ENCODE measurements at regions of chr6 and their contacts with region 1.

Region 1: DNA sequence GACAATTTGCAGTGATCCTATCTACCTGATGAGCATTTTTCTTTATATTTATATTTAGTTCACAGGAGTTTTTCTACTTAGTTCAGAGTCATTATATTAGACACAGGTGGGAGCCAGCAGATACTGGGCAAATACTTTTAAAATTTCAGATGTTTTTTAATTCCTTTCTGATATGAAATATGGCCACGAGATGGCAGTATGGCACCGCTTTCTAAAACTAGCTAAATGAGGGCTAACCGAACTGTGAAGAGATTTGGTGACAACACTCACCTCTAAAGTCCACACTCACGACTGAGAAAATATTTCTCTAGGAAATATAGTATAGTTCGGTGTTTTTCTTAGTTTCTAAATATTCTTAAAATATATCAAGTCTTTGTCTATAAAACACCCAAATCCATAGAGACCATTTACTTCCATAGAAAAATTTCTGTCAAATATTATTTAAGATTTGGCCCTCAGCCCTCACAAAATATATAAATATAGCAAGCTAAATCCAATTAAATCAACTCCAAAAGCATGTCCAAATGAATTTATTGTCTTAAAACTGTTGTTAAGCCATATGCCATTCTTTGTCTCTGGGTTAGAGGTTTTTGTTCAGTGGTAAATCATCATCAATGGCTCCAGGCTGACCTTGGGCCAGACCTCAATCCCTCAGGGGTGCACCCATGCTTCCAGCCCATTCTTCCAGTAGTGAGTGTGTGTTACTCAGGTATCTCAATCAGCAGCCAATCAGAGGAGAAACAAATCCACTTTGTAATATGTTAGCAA is 63.6 kb downstream of the HUS1B start:
- DNase-seq: peak; percentile 80
- ATAC-seq: peak; percentile 63
- H3K4me3 Mint-ChIP-seq: no peak overlapping the region
- H3K27ac Mint-ChIP-seq: peak overlapping the region; percentile 74
- H3K4me1 Mint-ChIP-seq: peaks cover 9% of the 10 kb centered on the region
- H3K27me3 Mint-ChIP-seq: no peaks in the 10 kb centered on the region

Region 2: GRCh38 chr6:470901-471448 is 122.3 kb before region 1 on chr6:
- CTCF ChIA-PET with region 1: no interaction called
- POLR2A ChIA-PET with region 1: no interaction called
- intact Hi-C with region 1: no loop called
- DNase-seq: no peak
- ATAC-seq: no peak
- H3K4me3 Mint-ChIP-seq: no peak overlapping the region
- H3K27ac Mint-ChIP-seq: no peak overlapping the region
- H3K4me1 Mint-ChIP-seq: peaks cover 67% of the 10 kb centered on the region
- H3K27me3 Mint-ChIP-seq: peaks cover 6% of the 10 kb centered on the region

Region 3: DNA sequence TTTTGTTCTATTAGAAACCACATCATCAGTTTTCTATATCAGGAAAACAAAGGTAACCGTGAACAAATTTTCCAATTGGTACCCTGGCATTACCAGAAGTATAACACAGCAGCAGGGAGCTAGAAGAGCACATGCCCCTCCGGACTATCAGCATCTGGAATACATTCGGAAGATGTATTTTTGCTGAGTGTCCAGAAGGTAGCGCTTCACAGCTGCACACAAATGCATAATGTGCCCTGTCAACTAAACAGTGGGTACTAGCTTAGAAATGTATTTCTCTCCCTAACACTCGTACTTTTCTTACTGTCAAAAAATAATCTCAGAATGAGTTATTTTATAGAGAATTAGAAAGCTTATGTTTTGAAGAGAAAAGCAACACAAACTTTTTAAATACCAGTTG is 14.0 kb before region 1 on chr6:
- CTCF ChIA-PET with region 1: interaction called, 34 read pairs
- POLR2A ChIA-PET with region 1: no interaction called
- intact Hi-C with region 1: no loop called
- DNase-seq: no peak
- ATAC-seq: no peak
- H3K4me3 Mint-ChIP-seq: no peak overlapping the region
- H3K27ac Mint-ChIP-seq: no peak overlapping the region
- H3K4me1 Mint-ChIP-seq: peaks cover 18% of the 10 kb centered on the region
- H3K27me3 Mint-ChIP-seq: no peaks in the 10 kb centered on the region

Region 4: GRCh38 chr6:701700-702479 is 108.6 kb after region 1 on chr6:
- CTCF ChIA-PET with region 1: interaction called, 10 read pairs
- POLR2A ChIA-PET with region 1: no interaction called
- intact Hi-C with region 1: no loop called
- DNase-seq: no peak
- ATAC-seq: no peak
- H3K4me3 Mint-ChIP-seq: no peak overlapping the region
- H3K27ac Mint-ChIP-seq: no peak overlapping the region
- H3K4me1 Mint-ChIP-seq: peaks cover 2% of the 10 kb centered on the region
- H3K27me3 Mint-ChIP-seq: peaks cover 8% of the 10 kb centered on the region

Region 5: GRCh38 chr6:786946-787763 is 193.8 kb after region 1 on chr6:
- CTCF ChIA-PET with region 1: interaction called, 7 read pairs
- POLR2A ChIA-PET with region 1: no interaction called
- intact Hi-C with region 1: loop called (anchors 1 to 2 kb)
- DNase-seq: peak; percentile 36
- ATAC-seq: peak; percentile 53
- H3K4me3 Mint-ChIP-seq: no peak overlapping the region
- H3K27ac Mint-ChIP-seq: peak overlapping the region; percentile 40
- H3K4me1 Mint-ChIP-seq: peaks cover 20% of the 10 kb centered on the region
- H3K27me3 Mint-ChIP-seq: peaks cover 12% of the 10 kb centered on the region

Region 6: GRCh38 chr6:894274-894673 is 301.0 kb after region 1 on chr6:
- CTCF ChIA-PET with region 1: no interaction called
- POLR2A ChIA-PET with region 1: no interaction called
- intact Hi-C with region 1: loop called in 1 of 2 experiments (anchors 10 kb)
- DNase-seq: peak; percentile 45
- ATAC-seq: no peak
- H3K4me3 Mint-ChIP-seq: no peak overlapping the region
- H3K27ac Mint-ChIP-seq: no peak overlapping the region
- H3K4me1 Mint-ChIP-seq: no peaks in the 10 kb centered on the region
- H3K27me3 Mint-ChIP-seq: peaks cover 13% of the 10 kb centered on the region

Region 7: GRCh38 chr6:1396952-1397868 is 803.9 kb after region 1 on chr6:
- CTCF ChIA-PET with region 1: interaction called, 18 read pairs
- POLR2A ChIA-PET with region 1: no interaction called
- intact Hi-C with region 1: loop called (anchors 1 kb)
- DNase-seq: peak; percentile 85
- ATAC-seq: peak; percentile 75
- H3K4me3 Mint-ChIP-seq: no peak overlapping the region
- H3K27ac Mint-ChIP-seq: no peak overlapping the region
- H3K4me1 Mint-ChIP-seq: peaks cover 4% of the 10 kb centered on the region
- H3K27me3 Mint-ChIP-seq: peaks cover 51% of the 10 kb centered on the region